Endothelial cell of umbilical vein (primary cell): ENCODE measurements at regions of chr4 and their contacts with region 1.

Region 1: GRCh38 chr4:121900132-121900983 is 30.1 kb upstream of the BBS7 start:
- DNase-seq: peak; percentile 61
- H3K4me3 ChIP-seq: no peak overlapping the region
- H3K27ac ChIP-seq: no peak overlapping the region
- H3K4me1 ChIP-seq: no peaks in the 10 kb centered on the region
- H3K27me3 ChIP-seq: peaks cover 2 to 13% of the 10 kb centered on the region in 2 experiments
- CTCF ChIP-seq: peak; percentile 50 to 57
- POLR2A ChIP-seq: no peak

Region 2: DNA sequence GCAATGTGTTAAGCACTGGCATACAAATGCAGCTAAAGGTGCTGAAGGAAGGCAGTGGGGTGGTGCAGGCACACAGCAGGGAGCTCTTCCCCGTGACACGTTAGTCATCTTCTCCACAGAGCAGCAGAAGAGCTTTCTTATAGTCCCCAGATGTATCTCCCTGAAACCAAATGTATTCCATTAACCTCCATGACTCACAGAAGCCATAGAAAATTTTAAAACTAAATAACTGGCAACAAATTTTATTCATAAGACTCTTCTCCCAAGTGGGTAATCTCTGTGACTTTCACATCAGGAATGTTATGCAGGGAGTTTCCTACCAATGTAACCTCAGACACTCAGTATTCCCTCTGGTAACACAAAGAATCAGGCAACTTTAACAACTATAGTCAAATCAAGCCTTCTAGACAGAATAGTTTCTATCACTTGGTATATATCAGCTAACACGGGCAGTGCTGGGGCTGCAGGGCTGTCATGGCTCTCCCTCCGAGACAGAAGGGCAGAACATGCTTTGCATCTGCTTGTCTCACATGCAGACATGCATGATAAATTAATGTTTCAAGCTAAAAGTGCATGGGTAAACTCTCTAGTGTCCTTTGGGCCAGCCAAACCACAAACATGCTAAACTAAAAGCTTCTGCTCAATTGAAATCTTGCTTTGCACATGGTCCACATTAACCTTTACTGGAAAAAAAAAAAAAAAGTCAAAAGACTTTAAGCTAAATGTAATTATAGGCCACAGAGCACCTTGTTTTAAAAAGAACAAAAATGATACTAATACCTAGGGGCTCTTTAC is 231.8 kb before region 1 on chr4:
- CTCF ChIA-PET with region 1: no interaction called
- POLR2A ChIA-PET with region 1: no interaction called
- dilution Hi-C with region 1: no loop called
- intact Hi-C with region 1: no loop called
- DNase-seq: no peak
- H3K4me3 ChIP-seq: no peak overlapping the region
- H3K27ac ChIP-seq: no peak overlapping the region
- H3K4me1 ChIP-seq: peaks cover 3% of the 10 kb centered on the region
- H3K27me3 ChIP-seq: no peaks in the 10 kb centered on the region
- CTCF ChIP-seq: no peak
- POLR2A ChIP-seq: no peak

Region 3: GRCh38 chr4:121877041-121877777 is 23.1 kb before region 1 on chr4:
- CTCF ChIA-PET with region 1: interaction called, 10 read pairs
- POLR2A ChIA-PET with region 1: no interaction called
- dilution Hi-C with region 1: no loop called
- intact Hi-C with region 1: no loop called
- DNase-seq: no peak
- H3K4me3 ChIP-seq: no peak overlapping the region
- H3K27ac ChIP-seq: no peak overlapping the region
- H3K4me1 ChIP-seq: no peaks in the 10 kb centered on the region
- H3K27me3 ChIP-seq: peaks cover 7 to 41% of the 10 kb centered on the region in 2 experiments
- CTCF ChIP-seq: no peak
- POLR2A ChIP-seq: no peak

Region 4: GRCh38 chr4:121885115-121885514 is 15.2 kb before region 1 on chr4:
- CTCF ChIA-PET with region 1: interaction called, 10 read pairs
- POLR2A ChIA-PET with region 1: no interaction called
- dilution Hi-C with region 1: no loop called
- intact Hi-C with region 1: no loop called
- DNase-seq: no peak
- H3K4me3 ChIP-seq: no peak overlapping the region
- H3K27ac ChIP-seq: no peak overlapping the region
- H3K4me1 ChIP-seq: no peaks in the 10 kb centered on the region
- H3K27me3 ChIP-seq: peaks cover 8 to 33% of the 10 kb centered on the region in 2 experiments
- CTCF ChIP-seq: no peak
- POLR2A ChIP-seq: no peak

Region 5: DNA sequence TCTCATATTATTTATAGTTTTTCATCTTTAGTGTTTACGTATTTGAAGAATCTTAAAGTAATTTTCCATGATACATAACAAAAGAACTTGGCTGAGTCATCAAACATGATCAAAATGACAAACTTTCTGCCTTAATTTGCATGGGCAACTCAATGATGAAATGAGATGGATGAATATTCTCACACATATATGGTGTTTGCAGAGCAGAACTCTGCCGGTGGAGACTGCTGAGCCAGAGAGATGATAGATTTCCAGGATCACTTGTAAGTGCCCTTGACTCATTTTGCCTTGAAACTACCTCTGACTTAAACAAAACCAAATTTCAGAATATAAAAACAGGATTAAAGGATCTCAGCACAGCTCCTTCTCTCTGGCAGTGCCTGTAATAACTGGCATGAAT is 13.3 kb after region 1 on chr4:
- CTCF ChIA-PET with region 1: interaction called, 11 read pairs
- POLR2A ChIA-PET with region 1: no interaction called
- dilution Hi-C with region 1: no loop called
- intact Hi-C with region 1: no loop called
- DNase-seq: no peak
- H3K4me3 ChIP-seq: no peak overlapping the region
- H3K27ac ChIP-seq: no peak overlapping the region
- H3K4me1 ChIP-seq: no peaks in the 10 kb centered on the region
- H3K27me3 ChIP-seq: peaks cover 5 to 7% of the 10 kb centered on the region in 2 experiments
- CTCF ChIP-seq: no peak
- POLR2A ChIP-seq: no peak

Region 6: DNA sequence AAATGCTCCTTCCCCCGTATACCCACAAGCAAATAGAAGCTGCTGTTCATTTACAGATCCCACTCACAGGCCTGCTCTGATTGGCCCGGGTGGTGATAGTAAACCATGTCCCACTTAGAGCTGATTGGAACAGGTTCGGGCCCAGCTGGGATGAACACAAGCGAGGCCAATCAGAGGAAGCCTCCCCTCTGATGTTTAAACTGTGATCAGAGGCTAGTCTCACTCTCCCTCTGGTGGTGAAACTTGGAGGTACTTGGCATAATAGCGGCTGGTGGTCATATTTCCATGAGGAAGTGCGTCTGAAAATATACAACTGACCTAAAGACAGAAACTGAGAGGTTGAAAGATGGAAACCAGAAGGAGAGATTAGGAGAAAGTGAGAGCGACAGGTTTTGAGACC is 103.0 kb after region 1 on chr4:
- CTCF ChIA-PET with region 1: interaction called, 20 read pairs
- POLR2A ChIA-PET with region 1: no interaction called
- dilution Hi-C with region 1: no loop called
- intact Hi-C with region 1: loop called (anchors 1 kb)
- DNase-seq: peak; percentile 25
- H3K4me3 ChIP-seq: no peak overlapping the region
- H3K27ac ChIP-seq: no peak overlapping the region
- H3K4me1 ChIP-seq: no peaks in the 10 kb centered on the region
- H3K27me3 ChIP-seq: peaks cover 2 to 6% of the 10 kb centered on the region in 2 experiments
- CTCF ChIP-seq: peak; percentile 37 to 45
- POLR2A ChIP-seq: no peak

Region 7: GRCh38 chr4:122142686-122143085 is 242.3 kb after region 1 on chr4:
- CTCF ChIA-PET with region 1: no interaction called
- POLR2A ChIA-PET with region 1: no interaction called
- dilution Hi-C with region 1: no loop called
- intact Hi-C with region 1: no loop called
- DNase-seq: no peak
- H3K4me3 ChIP-seq: no peak overlapping the region
- H3K27ac ChIP-seq: no peak overlapping the region
- H3K4me1 ChIP-seq: no peaks in the 10 kb centered on the region
- H3K27me3 ChIP-seq: peaks cover 0 to 2% of the 10 kb centered on the region in 2 experiments
- CTCF ChIP-seq: no peak
- POLR2A ChIP-seq: no peak

Region 8: GRCh38 chr4:122224348-122224747 is 324.0 kb after region 1 on chr4:
- CTCF ChIA-PET with region 1: interaction called, 16 read pairs
- POLR2A ChIA-PET with region 1: no interaction called
- dilution Hi-C with region 1: no loop called
- intact Hi-C with region 1: loop called (anchors 1 kb)
- DNase-seq: peak; percentile 17
- H3K4me3 ChIP-seq: no peak overlapping the region
- H3K27ac ChIP-seq: no peak overlapping the region
- H3K4me1 ChIP-seq: no peaks in the 10 kb centered on the region
- H3K27me3 ChIP-seq: no peaks in the 10 kb centered on the region
- CTCF ChIP-seq: peak; percentile 16 to 17
- POLR2A ChIP-seq: no peak

Region 9: DNA sequence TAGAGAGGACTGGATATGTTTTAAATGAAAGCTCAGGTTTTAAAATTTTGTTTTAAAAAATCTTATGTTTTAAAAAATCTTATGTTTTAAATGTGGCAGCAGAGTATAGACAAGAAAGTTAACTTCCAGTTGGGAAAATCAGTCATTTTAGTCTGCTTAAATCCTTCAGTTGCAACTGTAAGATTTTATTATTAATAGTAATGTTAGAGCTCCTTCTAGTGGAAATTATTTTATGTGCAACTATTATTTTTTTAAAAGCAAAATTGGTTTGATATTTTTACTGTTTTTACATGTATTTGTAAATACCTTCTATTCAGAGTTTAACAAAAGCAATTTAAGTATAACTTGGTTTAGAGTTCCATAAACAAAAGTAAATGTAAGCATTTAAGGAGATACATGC is 1030.5 kb after region 1 on chr4:
- CTCF ChIA-PET with region 1: interaction called, 13 read pairs
- POLR2A ChIA-PET with region 1: no interaction called
- dilution Hi-C with region 1: no loop called
- intact Hi-C with region 1: no loop called
- DNase-seq: peak; percentile 40
- H3K4me3 ChIP-seq: no peak overlapping the region
- H3K27ac ChIP-seq: no peak overlapping the region
- H3K4me1 ChIP-seq: no peaks in the 10 kb centered on the region
- H3K27me3 ChIP-seq: no peaks in the 10 kb centered on the region
- CTCF ChIP-seq: peak in 1 of 2 donors; percentile 25
- POLR2A ChIP-seq: no peak